Motor neuron (in vitro differentiated cells): ENCODE measurements at regions of chr1 and their contacts with region 1.

Region 1: DNA sequence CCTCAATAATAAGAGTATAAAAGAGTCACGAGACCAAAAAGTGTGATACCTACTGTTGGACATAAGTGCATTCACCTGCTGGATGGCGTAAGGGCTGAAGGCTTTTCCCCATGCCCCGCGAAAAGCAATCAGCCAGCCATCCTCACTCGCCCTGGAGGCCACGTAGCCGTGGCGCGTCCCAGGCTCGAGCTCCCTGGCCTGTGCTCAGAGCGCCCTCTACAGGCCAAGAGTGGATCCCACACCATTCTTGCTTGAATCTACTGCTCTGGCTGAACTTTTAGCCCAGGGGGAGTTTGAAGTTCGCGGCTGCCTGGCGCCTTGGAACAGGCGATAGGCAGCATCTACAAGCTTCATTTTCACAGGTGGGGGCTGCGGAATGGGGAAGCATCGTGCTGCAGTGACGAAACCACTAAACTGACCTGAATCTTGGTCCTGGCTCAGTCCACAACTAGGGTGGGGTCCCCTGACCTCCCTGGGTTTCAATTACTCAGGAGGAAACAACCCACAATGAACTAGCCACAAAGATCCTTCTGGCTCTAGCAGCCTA is 70.3 kb upstream of the SERBP1 start:
- ATAC-seq: peak; percentile 100
- H3K4me3 ChIP-seq: no peak overlapping the region
- H3K27ac ChIP-seq: no peak overlapping the region
- H3K4me1 ChIP-seq: no peaks in the 10 kb centered on the region

Region 2: GRCh38 chr1:67227196-67227595 is 273.3 kb before region 1 on chr1:
- in situ Hi-C with region 1: loop called in 7 of 9 experiments (anchors 10 to 25 kb)
- ATAC-seq: peak in 2 of 8 experiments; percentile 56 to 73
- H3K4me3 ChIP-seq: no peak overlapping the region
- H3K27ac ChIP-seq: no peak overlapping the region
- H3K4me1 ChIP-seq: peaks cover 14 to 24% of the 10 kb centered on the region in 2 donors

Region 3: DNA sequence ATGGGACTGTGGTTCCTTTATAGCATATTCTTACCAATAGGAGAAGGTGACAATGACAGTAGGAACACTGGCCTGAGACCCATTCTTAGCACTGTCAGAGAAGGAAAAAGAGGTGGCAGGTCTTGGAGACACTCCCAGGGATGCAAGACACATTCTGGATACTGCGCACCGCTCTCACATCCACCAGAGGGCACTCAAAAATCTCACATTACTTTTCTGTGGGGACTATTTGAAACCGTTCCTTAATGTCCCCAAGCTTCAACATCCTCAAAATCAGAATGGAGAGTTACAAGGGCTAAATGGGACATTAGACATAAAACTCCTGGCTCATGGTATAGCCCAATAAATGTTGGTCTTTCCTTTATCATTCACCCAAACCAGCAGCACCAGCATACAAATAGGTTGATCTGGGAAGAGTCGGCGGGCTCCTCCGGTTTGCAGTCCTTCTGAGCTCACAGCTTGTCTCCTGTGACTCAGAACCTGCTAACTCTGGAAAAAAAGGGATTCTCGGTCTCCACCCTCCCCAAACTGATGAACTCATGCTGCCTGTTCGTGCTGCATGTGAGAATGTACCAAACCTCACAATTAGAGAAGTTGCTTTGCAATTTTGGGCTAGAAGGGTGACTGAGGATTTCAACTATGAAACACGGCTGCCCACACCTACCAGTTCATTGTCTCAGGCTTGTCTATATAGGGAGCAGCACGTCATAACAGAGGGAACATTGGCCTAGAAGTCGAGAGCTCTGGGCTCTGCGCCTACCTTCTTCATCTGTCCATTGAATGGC is 152.6 kb before region 1 on chr1:
- in situ Hi-C with region 1: loop called in 4 of 9 experiments (anchors 25 kb)
- ATAC-seq: peak; percentile 54 to 95 (median 80)
- H3K4me3 ChIP-seq: no peak overlapping the region
- H3K27ac ChIP-seq: no peak overlapping the region
- H3K4me1 ChIP-seq: peaks cover 0 to 2% of the 10 kb centered on the region in 2 donors